Activated CD4-positive, alpha-beta T cell treated with anti-CD3 and anti-CD28 coated beads for 36 hours (primary cell): ENCODE measurements at regions of chr12 and their contacts with region 1.

Region 1: GRCh38 chr12:122449353-122449752 is 26.9 kb upstream of the CLIP1 start:
- DNase-seq: peak; percentile 35
- ATAC-seq: peak; percentile 55
- H3K4me3 Mint-ChIP-seq: no peak overlapping the region
- H3K27ac Mint-ChIP-seq: no peak overlapping the region
- H3K4me1 Mint-ChIP-seq: peaks cover 28% of the 10 kb centered on the region
- H3K27me3 Mint-ChIP-seq: no peaks in the 10 kb centered on the region

Region 2: DNA sequence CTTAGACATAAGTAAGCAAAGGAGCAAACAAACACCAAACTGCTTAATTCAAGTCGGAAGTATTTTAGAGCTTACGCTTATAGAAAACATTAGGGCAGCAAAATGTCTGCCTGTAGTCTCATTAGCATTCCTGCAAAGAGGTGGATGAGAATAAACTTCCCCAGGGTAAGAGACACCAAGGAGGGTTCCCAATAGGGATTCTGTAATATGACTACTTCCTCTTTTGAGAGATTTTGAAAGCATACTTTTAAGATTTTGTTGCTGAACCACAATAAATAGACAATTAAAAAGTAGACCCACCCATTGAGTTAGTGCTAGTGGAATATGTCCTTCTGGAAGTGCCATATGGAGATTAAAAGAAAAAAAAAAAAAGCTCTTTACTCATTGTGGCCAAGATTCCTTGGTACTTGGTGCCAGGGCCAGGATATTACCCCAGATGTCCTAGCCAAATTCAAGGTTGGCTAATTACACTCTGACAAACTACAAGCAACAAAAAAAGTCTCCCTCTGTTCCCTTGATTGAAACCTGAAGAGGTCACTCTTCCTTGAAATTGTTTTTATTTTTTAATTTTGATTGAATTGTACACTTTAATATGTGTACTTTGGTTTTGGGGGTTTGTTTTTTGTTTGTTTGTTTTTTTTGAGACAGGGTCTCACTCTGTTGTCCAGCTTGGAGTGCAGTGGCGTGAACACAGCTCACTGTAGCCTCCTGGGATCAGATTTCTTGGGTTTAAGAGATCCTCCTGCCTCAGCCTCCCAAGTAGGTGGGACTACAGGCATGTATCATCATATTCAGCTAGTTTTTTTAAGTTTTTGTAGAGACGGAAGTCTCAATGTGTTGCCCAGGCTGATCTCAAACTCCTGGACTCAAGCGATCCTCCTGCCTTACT is 35.6 kb before region 1 on chr12:
- CTCF ChIA-PET with region 1: interaction called, 3 read pairs
- POLR2A ChIA-PET with region 1: interaction called, 5 read pairs
- intact Hi-C with region 1: loop called in 1 of 2 experiments (anchors 5 kb)
- DNase-seq: no peak
- ATAC-seq: no peak
- H3K4me3 Mint-ChIP-seq: peak overlapping the region; percentile 69
- H3K27ac Mint-ChIP-seq: peak overlapping the region; percentile 99
- H3K4me1 Mint-ChIP-seq: peaks cover 54% of the 10 kb centered on the region
- H3K27me3 Mint-ChIP-seq: no peaks in the 10 kb centered on the region

Region 3: DNA sequence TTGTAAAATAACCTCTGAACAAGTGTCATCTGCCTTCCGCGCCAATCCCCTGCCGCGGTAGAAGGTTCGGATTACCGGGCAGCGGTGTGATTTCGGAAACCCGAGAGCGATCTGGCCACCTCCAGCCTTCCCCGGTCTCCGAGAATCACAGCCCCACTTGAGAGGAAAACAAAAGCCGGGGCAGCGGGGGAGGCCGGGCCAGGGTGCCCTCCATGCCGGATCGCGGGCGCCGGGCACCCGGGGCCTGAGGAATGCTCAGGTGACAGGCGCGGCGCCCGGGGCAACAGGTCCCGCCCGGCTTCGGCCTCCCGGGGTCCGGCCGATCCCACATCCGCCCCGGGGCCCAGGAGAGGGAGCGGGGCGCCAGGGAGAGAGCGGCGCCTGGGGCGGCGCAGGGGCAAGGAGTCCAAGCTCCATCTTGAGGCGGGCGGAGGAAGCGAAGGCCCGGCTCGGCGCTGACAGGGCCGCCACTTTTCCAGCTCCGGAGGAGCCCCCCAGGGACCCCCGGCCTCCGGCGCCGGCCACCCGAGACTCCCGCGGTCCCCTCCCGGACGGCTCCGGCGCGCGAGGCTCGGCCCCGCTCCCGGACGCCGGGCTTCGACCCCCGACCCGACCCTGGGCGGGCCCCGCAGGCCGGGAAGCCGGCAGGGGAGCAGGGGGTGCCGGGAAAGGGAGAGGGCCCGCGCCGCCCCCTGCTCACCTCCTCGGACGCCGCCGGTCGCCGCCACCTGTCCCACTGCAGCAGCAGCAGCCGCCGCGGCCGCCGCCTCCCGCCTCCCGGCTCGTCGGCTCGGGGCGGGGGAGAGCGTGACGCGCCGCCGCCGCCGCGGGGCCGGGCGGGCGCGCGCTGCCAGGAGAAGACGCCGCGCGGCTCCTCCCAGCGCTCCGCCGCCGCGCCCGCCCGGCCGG is 27.3 kb before region 1 on chr12 and contains the start of gene CLIP1:
- CTCF ChIA-PET with region 1: interaction called, 3 read pairs
- POLR2A ChIA-PET with region 1: no interaction called
- intact Hi-C with region 1: loop called in 1 of 2 experiments (anchors 2 kb)
- DNase-seq: peak; percentile 77
- ATAC-seq: peak; percentile 74
- H3K4me3 Mint-ChIP-seq: peak within 1 kb of the TSS; percentile 91
- H3K27ac Mint-ChIP-seq: peak within 1 kb of the TSS; percentile 89
- H3K4me1 Mint-ChIP-seq: peaks cover 37% of the 10 kb centered on the region
- H3K27me3 Mint-ChIP-seq: no peaks in the 10 kb centered on the region
- total RNA-seq, gene CLIP1: 53.9 to 58.6 TPM